ENCODE measurements at regions of chr16 and their contacts with region 1.

Region 1: GRCh38 chr16:2317231-2318020 is 23.1 kb downstream of the ABCA3 start:
- DNase-seq: no peak
- CTCF ChIP-seq: no peak

Region 2: GRCh38 chr16:2163211-2163881 is 154.1 kb before region 1 on chr16:
- CTCF ChIA-PET with region 1: no interaction called
- POLR2A ChIA-PET with region 1: no interaction called
- DNase-seq: no peak
- CTCF ChIP-seq: no peak

Region 3: GRCh38 chr16:2267913-2268666 is 49.3 kb before region 1 on chr16 and contains the start of gene RNPS1:
- CTCF ChIA-PET with region 1: no interaction called
- POLR2A ChIA-PET with region 1: no interaction called
- DNase-seq: peak; percentile 100
- CTCF ChIP-seq: no peak

Region 4: DNA sequence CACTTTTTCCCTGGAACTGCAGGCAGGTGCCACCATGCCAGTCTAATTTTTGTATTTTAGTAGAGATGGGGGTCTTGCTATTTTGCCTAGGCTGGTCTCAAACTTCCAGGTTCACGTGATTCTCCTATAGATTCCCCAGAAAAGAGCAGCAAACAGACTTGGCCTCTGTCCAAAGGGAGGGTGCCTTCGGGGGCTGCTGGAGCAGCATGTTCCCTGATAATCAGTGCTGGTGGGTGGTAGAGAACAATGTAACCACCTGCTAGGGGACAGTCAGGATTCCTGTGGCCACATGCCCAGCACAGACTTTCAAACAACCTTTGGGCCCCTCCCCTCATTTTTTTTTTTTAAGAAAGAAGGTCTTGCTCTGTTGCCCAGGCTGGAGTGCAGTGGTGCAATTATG is 97.7 kb after region 1 on chr16:
- CTCF ChIA-PET with region 1: no interaction called
- POLR2A ChIA-PET with region 1: interaction called, 13 read pairs
- DNase-seq: no peak
- CTCF ChIP-seq: no peak

Measured in GM10248 (cell line).